A549 (cell line): ENCODE measurements at regions of chr13 and their contacts with region 1.

Region 1: GRCh38 chr13:22801402-22802003 is 379.3 kb upstream of the SGCG start:
- DNase-seq: peak in 1 of 2 experiments; percentile 18
- ATAC-seq: no peak
- H3K4me3 ChIP-seq: no peak overlapping the region
- H3K27ac ChIP-seq: no peak overlapping the region
- H3K4me1 ChIP-seq: no peaks in the 10 kb centered on the region
- CTCF ChIP-seq: peak; percentile 30; the same call in 2 of the 3 replicates
- EP300 ChIP-seq: no peak
- POLR2A ChIP-seq: no peak
- RAD21 ChIP-seq: peak; percentile 36 to 49; a peak in 3 of 5 replicates

Region 2: GRCh38 chr13:22789027-22789593 is 12.4 kb before region 1 on chr13:
- CTCF ChIA-PET with region 1: interaction called, 10 read pairs
- POLR2A ChIA-PET with region 1: no interaction called
- DNase-seq: no peak
- ATAC-seq: no peak
- H3K4me3 ChIP-seq: no peak overlapping the region
- H3K27ac ChIP-seq: no peak overlapping the region
- H3K4me1 ChIP-seq: no peaks in the 10 kb centered on the region
- CTCF ChIP-seq: no peak
- EP300 ChIP-seq: no peak
- POLR2A ChIP-seq: no peak
- RAD21 ChIP-seq: no peak

Region 3: DNA sequence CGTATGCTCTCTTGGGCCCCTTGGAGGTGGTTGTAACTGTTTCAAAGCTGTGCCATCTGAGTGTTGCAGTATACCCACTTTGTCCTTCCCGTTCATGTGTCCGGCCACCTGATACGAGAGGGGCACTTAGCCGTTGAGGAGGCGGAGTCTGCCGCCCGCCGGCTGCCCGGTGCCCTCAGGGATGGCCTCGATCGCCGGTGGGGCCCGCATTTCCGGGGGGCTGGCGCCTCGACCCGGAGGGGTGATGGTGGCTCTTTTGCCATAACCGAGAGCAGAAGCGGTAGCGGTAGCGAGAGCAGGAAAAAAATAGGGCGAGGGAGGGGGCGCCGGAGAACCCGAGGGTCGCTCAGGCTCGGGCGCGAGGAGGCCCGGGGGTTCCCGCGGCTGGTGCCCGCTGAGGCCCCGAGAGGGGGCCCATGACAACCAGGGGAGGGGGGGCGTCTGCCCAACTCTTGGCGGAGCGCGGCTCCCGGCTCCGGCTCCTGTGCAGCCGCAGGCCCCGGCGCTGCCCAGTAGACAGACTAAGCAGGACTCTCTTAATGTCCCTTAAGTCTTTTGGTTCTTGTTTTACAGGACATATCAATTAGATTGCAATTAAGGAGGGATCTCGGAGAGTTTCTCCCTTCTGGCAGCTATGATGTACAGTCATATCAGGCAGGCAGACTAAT is 36.6 kb after region 1 on chr13:
- CTCF ChIA-PET with region 1: no interaction called
- POLR2A ChIA-PET with region 1: no interaction called
- DNase-seq: no peak
- ATAC-seq: no peak
- H3K4me3 ChIP-seq: no peak overlapping the region
- H3K27ac ChIP-seq: no peak overlapping the region
- H3K4me1 ChIP-seq: no peaks in the 10 kb centered on the region
- CTCF ChIP-seq: no peak
- EP300 ChIP-seq: no peak
- POLR2A ChIP-seq: no peak
- RAD21 ChIP-seq: no peak

Region 4: DNA sequence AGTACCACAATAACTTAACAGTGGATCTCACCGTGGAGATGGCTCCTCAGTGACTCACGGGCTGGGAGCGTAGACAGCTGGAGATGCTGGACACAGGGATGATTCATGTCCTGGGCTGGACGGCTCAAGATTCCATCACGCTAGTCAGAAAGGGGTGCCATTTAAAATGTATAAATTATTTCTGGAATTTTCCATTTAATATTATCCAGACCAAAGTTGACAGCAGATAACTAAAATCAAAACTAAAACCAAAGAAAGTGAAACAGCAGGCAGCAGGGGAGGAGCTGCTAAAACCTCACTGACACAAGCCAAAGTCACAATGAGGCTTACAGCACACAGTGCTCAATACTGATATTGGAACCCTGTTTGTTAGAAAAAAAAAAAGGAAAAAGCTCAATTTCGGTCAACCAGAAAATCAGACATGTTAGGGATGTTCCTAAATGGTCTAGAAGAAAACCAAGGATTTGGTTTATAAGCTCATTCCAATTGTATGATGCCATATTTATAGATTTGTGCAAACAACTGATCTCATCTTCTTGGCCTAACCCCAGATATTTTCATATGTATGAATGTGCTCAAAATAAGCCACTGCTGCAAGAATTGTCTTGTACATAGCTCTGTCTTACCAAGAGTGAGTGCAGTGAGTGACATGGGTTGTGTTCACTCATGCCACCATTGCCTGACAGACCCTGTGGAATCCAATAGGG is 520.2 kb after region 1 on chr13:
- CTCF ChIA-PET with region 1: interaction called, 18 read pairs
- POLR2A ChIA-PET with region 1: no interaction called
- DNase-seq: peak; percentile 49 to 86
- ATAC-seq: peak; percentile 97 to 99
- H3K4me3 ChIP-seq: no peak overlapping the region; the same call in 2 of the 3 replicates
- H3K27ac ChIP-seq: peak overlapping the region; percentile 79 to 88
- H3K4me1 ChIP-seq: peaks cover 49% of the 10 kb centered on the region
- CTCF ChIP-seq: no peak
- EP300 ChIP-seq: no peak
- POLR2A ChIP-seq: no peak
- RAD21 ChIP-seq: no peak